ENCODE measurements at regions of chr11 and their contacts with region 1.

Region 1: GRCh38 chr11:64317957-64318693 is at the start of gene PRDX5:
- DNase-seq: peak; percentile 90
- ATAC-seq: peak; percentile 71
- H3K4me3 Mint-ChIP-seq: peak within 1 kb of the TSS; percentile 90
- H3K27ac Mint-ChIP-seq: peak within 1 kb of the TSS; percentile 99
- H3K4me1 Mint-ChIP-seq: peaks cover 17% of the 10 kb centered on the region
- H3K27me3 Mint-ChIP-seq: no peaks in the 10 kb centered on the region
- CTCF ChIP-seq: no peak
- total RNA-seq, gene PRDX5: 255 to 293 TPM (median 282 TPM) in 3 replicates

Region 2: DNA sequence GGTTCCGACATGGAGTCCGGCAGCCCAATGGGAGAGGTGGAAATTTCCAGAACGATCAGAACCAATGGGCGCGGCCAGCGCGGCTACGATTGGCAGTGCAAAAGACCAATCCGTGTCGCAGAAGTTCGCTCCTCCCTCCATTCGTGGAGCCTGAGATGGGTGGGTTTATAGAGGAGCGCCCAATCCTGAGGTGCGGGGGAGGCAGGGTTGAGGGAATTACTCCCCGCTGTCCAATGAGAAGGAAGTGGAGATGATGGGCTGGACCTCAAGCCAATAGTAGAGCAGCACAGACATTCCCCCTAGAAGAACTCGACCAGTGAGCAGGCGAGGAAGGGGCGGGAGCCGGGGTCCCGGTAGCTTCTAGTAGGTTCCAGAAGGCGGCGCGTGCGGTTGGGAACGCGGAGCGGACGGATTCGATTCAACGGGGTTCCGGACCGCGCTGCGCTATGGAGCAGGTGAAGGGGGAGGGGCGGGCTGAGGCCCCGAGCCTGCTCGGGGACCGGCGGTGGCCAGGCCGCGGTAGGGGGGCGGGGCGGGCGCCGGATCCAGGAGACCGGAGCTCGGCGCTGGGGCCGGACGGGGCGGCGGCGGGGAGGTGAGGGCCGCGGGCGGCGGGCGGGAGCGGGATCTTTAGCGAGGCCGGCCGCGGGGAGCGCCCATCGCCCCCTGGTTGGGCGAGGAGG is 132.2 kb before region 1 on chr11 and contains the start of gene STIP1:
- CTCF ChIA-PET with region 1: interaction called, 10 read pairs
- POLR2A ChIA-PET with region 1: interaction called, 7 read pairs
- DNase-seq: peak; percentile 98
- ATAC-seq: peak; percentile 92
- H3K4me3 Mint-ChIP-seq: peak within 1 kb of the TSS; percentile 93
- H3K27ac Mint-ChIP-seq: peak within 1 kb of the TSS; percentile 96
- H3K4me1 Mint-ChIP-seq: peaks cover 37% of the 10 kb centered on the region
- H3K27me3 Mint-ChIP-seq: no peaks in the 10 kb centered on the region
- CTCF ChIP-seq: no peak
- total RNA-seq, gene STIP1: 291 to 296 TPM (median 296 TPM) in 3 replicates

Region 3: GRCh38 chr11:64269380-64270234 is 48.5 kb before region 1 on chr11:
- CTCF ChIA-PET with region 1: interaction called, 17 read pairs
- POLR2A ChIA-PET with region 1: interaction called, 16 read pairs
- DNase-seq: peak; percentile 98
- ATAC-seq: peak; percentile 83
- H3K4me3 Mint-ChIP-seq: peak overlapping the region; percentile 99
- H3K27ac Mint-ChIP-seq: peak overlapping the region; percentile 100
- H3K4me1 Mint-ChIP-seq: peaks cover 21% of the 10 kb centered on the region
- H3K27me3 Mint-ChIP-seq: no peaks in the 10 kb centered on the region
- CTCF ChIP-seq: no peak

Region 4: GRCh38 chr11:64331557-64332371 is 13.6 kb after region 1 on chr11:
- CTCF ChIA-PET with region 1: interaction called, 61 read pairs
- POLR2A ChIA-PET with region 1: interaction called, 6 read pairs
- DNase-seq: peak; percentile 65
- ATAC-seq: peak; percentile 79
- H3K4me3 Mint-ChIP-seq: no peak overlapping the region
- H3K27ac Mint-ChIP-seq: peak overlapping the region; percentile 11
- H3K4me1 Mint-ChIP-seq: peaks cover 10% of the 10 kb centered on the region
- H3K27me3 Mint-ChIP-seq: peaks cover 12% of the 10 kb centered on the region; the same call in 1 of the 2 replicates
- CTCF ChIP-seq: no peak

Region 5: GRCh38 chr11:64348611-64349484 is 30.7 kb after region 1 on chr11:
- CTCF ChIA-PET with region 1: interaction called, 24 read pairs
- POLR2A ChIA-PET with region 1: interaction called, 5 read pairs
- DNase-seq: no peak
- ATAC-seq: peak; percentile 27
- H3K4me3 Mint-ChIP-seq: no peak overlapping the region
- H3K27ac Mint-ChIP-seq: no peak overlapping the region
- H3K4me1 Mint-ChIP-seq: peaks cover 5% of the 10 kb centered on the region; the same call in 1 of the 2 replicates
- H3K27me3 Mint-ChIP-seq: no peaks in the 10 kb centered on the region
- CTCF ChIP-seq: no peak